WTC11 (cell line): ENCODE measurements at regions of chr3 and their contacts with region 1.

Region 1: DNA sequence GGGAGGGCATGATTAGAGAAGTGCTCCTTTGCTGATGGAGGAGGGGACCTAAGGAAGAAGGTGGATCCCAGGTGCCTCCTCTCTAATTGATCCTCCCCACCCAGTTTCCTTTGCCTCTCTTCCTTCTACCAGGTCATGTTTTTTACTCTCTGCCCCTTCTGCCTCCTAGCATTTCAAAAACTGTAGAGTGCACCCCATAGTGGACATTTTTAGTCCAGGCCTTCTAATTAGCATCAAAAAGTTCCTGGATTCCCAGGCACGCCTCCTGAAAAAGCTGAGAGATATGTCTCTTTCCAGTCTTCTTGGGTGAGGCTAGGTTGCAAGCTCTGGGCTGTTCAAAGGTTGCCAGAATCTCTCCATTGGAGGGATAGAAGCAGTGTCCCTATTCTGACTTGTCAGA is 18.7 kb upstream of the ITGB5 start:
- DNase-seq: no peak
- ATAC-seq: no peak
- H3K4me3 Mint-ChIP-seq: no peak overlapping the region
- H3K27ac Mint-ChIP-seq: no peak overlapping the region
- H3K4me1 Mint-ChIP-seq: peaks cover 14% of the 10 kb centered on the region
- H3K27me3 Mint-ChIP-seq: peaks cover 3% of the 10 kb centered on the region; the same call in 1 of the 2 replicates
- CTCF ChIP-seq: no peak

Region 2: GRCh38 chr3:124772081-124772831 is 133.6 kb before region 1 on chr3:
- CTCF ChIA-PET with region 1: interaction called, 10 read pairs
- POLR2A ChIA-PET with region 1: no interaction called
- DNase-seq: no peak
- ATAC-seq: no peak
- H3K4me3 Mint-ChIP-seq: no peak overlapping the region
- H3K27ac Mint-ChIP-seq: peak overlapping the region; percentile 57
- H3K4me1 Mint-ChIP-seq: peaks cover 32% of the 10 kb centered on the region
- H3K27me3 Mint-ChIP-seq: no peaks in the 10 kb centered on the region
- CTCF ChIP-seq: no peak

Region 3: DNA sequence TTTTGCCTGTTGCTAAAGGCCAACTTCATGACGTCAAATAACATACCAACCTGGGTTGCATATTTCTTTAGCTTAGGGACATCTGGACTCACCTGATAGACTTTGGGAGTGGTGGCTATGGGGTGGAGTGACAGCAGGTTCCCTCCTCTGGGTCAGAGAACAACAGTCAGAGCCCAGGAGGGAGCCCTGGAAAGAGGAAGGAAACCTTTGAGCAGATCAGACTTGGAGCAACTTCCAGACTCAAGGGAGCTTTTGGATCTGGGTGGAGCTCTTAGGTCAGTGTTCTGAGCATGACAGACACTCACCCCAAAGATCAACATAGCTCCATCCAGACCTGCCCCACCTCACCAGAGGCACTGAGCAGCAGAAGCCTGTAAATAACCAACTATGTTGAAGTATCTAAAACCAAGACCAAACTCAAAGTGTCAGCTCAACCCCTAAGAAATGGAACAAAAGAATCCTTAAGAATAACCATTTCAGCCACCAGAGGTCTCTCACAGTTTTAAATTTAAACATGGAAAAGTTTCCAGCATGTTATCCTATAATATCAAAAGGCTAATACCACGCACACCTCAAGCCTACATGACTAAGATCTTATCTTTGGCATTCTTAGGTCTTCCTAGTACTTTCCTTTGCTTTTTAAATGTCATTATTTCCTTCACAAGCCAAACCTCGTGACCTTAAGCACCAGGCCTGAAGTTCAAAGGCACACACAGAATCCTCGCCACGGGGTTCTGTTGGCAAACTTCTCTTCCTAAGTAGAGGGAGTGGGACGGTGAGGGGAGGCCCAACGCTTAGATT is 119.2 kb before region 1 on chr3:
- CTCF ChIA-PET with region 1: interaction called, 32 read pairs
- POLR2A ChIA-PET with region 1: no interaction called
- DNase-seq: no peak
- ATAC-seq: no peak
- H3K4me3 Mint-ChIP-seq: no peak overlapping the region
- H3K27ac Mint-ChIP-seq: peak overlapping the region; percentile 88
- H3K4me1 Mint-ChIP-seq: peaks cover 12% of the 10 kb centered on the region
- H3K27me3 Mint-ChIP-seq: no peaks in the 10 kb centered on the region
- CTCF ChIP-seq: no peak

Region 4: GRCh38 chr3:124883766-124884473 is 21.9 kb before region 1 on chr3:
- CTCF ChIA-PET with region 1: interaction called, 33 read pairs
- POLR2A ChIA-PET with region 1: no interaction called
- DNase-seq: no peak
- ATAC-seq: no peak
- H3K4me3 Mint-ChIP-seq: peak overlapping the region; percentile 88
- H3K27ac Mint-ChIP-seq: peak overlapping the region; percentile 97
- H3K4me1 Mint-ChIP-seq: peaks cover 68% of the 10 kb centered on the region
- H3K27me3 Mint-ChIP-seq: no peaks in the 10 kb centered on the region
- CTCF ChIP-seq: no peak

Region 5: GRCh38 chr3:124890282-124891190 is 15.3 kb before region 1 on chr3:
- CTCF ChIA-PET with region 1: interaction called, 33 read pairs
- POLR2A ChIA-PET with region 1: no interaction called
- DNase-seq: no peak
- ATAC-seq: no peak
- H3K4me3 Mint-ChIP-seq: no peak overlapping the region
- H3K27ac Mint-ChIP-seq: peak overlapping the region; percentile 97
- H3K4me1 Mint-ChIP-seq: peaks cover 40% of the 10 kb centered on the region
- H3K27me3 Mint-ChIP-seq: no peaks in the 10 kb centered on the region
- CTCF ChIP-seq: no peak